Gastrocnemius medialis (tissue), 4 donors: ENCODE measurements at regions of chr13 and their contacts with region 1.

Region 1: DNA sequence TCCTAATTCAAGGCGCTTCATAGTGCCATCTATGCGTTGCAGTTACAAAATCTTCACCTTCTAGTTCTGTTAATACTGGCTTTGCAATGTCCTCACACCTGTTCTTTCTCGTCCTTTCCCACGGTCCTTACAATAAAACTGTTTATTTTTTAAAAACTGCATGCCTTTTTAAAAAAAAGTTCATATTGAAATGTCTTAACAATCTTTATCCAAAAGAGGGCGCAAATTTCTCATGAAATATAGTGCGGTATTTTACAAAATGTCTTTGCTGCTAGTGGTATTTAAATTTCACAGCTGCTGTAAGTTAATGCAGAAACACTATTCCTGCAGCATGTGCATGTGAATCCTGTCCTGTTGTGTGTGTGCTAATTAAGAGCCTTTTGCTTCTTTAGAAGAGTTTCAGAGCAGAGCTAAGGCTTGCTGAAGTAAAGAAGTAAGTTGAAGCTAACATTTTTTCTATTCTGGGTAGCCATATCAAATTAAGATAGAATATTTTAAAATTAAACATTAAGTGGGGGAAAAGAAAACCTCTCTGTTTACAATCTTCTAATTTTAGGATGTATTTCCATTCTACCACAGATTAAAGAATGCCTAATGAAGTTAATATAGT is 15.8 kb upstream of the CLDN10 start:
- DNase-seq: no peak
- ATAC-seq: no peak
- H3K4me3 ChIP-seq: no peak overlapping the region
- H3K27ac ChIP-seq: no peak overlapping the region
- H3K4me1 ChIP-seq: peaks cover 19 to 32% of the 10 kb centered on the region in 2 donors
- H3K27me3 ChIP-seq: no peaks in the 10 kb centered on the region
- CTCF ChIP-seq: peak in 1 of 5 experiments; percentile 38
- POLR2A ChIP-seq: no peak

Region 2: GRCh38 chr13:95627590-95627989 is 90.9 kb after region 1 on chr13:
- in situ Hi-C with region 1: no loop called
- intact Hi-C with region 1: no loop called
- DNase-seq: no peak
- ATAC-seq: no peak
- H3K4me3 ChIP-seq: no peak overlapping the region
- H3K27ac ChIP-seq: no peak overlapping the region
- H3K4me1 ChIP-seq: no peaks in the 10 kb centered on the region
- H3K27me3 ChIP-seq: no peaks in the 10 kb centered on the region
- CTCF ChIP-seq: no peak
- POLR2A ChIP-seq: no peak

Region 3: DNA sequence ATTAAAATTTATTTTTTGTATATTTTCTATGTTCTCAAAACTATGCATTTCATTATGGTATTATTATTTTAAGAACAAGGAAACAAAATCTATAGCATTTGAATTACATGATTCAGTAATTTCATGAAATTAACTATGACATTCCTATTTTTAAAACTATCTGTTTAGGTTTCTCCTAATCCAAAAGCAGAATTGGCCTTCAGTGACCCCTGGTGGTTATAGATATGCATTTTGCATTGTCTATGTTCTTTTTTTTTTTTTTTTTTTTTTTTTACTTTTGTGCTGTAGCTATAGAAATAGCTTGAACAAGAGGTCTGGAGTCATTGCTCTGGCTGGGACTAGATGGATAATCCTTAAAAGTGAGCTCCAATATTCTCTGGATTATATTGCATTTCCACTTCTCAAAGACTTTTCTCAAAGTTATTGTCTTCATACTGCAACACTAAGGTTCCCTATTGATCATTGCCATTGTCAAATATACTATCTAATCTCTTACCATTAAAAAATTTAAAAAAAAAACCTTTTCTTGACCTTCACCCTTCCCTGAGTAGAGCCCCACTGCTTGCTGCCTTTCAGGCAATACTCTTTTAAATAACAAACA is 124.3 kb after region 1 on chr13:
- in situ Hi-C with region 1: loop called in 1 of 4 experiments (anchors 10 kb)
- intact Hi-C with region 1: no loop called
- DNase-seq: no peak
- ATAC-seq: no peak
- H3K4me3 ChIP-seq: no peak overlapping the region
- H3K27ac ChIP-seq: no peak overlapping the region
- H3K4me1 ChIP-seq: no peaks in the 10 kb centered on the region
- H3K27me3 ChIP-seq: no peaks in the 10 kb centered on the region
- CTCF ChIP-seq: peak; percentile 18 to 46 (median 25)
- POLR2A ChIP-seq: no peak

Region 4: DNA sequence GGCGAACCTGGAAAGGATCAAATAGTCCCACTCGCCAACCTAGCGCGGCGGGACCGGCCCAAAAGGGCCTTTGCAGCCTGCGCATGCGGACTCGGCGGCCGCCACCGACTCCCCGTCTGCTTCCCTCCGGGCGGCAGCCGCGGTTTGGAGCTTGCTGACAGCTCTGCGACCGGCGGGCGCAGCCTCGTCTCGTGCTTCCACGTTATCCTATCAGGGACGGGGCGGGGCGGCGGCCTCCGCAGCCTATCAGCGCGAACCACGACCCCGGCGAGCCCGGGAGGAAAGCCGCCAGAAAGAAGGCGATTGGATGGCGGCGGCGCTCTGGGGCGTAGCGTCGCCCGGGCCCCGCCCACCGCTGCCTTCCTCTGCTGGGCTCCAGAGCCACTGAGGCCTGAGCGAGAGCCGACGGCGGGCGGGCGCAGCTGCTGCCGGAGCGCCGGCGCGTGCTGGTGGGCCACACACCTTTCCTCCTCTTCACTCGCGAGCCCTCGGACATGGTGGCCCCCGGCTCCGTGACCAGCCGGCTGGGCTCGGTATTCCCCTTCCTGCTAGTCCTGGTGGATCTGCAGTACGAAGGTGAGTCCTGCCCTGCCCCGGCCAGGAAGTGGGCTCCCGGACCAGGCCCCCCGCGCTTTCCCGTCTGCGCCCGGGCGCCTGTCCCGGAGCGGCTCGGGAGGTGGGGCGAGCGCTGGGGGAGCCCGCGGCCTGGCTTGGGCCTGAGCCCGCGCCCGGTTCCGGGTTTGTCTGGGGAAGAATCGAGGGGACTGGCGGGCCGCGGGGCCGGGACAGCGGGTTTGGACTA is 140.2 kb after region 1 on chr13 and contains the start of gene DNAJC3:
- in situ Hi-C with region 1: no loop called
- intact Hi-C with region 1: loop called (anchors 5 kb)
- DNase-seq: peak; percentile 98 to 99
- ATAC-seq: peak; percentile 83 to 85
- H3K4me3 ChIP-seq: peak within 1 kb of the TSS; percentile 77 to 98 (median 82)
- H3K27ac ChIP-seq: peak within 1 kb of the TSS; percentile 98 to 99 (median 98)
- H3K4me1 ChIP-seq: peaks cover 56 to 60% of the 10 kb centered on the region in 2 donors
- H3K27me3 ChIP-seq: no peaks in the 10 kb centered on the region
- CTCF ChIP-seq: no peak
- POLR2A ChIP-seq: peak; percentile 99 to 100
- total RNA-seq, gene DNAJC3: 15.7 to 21.6 (median 20.5) TPM